ENCODE measurements at regions of chr4 and their contacts with region 1.

Region 1: DNA sequence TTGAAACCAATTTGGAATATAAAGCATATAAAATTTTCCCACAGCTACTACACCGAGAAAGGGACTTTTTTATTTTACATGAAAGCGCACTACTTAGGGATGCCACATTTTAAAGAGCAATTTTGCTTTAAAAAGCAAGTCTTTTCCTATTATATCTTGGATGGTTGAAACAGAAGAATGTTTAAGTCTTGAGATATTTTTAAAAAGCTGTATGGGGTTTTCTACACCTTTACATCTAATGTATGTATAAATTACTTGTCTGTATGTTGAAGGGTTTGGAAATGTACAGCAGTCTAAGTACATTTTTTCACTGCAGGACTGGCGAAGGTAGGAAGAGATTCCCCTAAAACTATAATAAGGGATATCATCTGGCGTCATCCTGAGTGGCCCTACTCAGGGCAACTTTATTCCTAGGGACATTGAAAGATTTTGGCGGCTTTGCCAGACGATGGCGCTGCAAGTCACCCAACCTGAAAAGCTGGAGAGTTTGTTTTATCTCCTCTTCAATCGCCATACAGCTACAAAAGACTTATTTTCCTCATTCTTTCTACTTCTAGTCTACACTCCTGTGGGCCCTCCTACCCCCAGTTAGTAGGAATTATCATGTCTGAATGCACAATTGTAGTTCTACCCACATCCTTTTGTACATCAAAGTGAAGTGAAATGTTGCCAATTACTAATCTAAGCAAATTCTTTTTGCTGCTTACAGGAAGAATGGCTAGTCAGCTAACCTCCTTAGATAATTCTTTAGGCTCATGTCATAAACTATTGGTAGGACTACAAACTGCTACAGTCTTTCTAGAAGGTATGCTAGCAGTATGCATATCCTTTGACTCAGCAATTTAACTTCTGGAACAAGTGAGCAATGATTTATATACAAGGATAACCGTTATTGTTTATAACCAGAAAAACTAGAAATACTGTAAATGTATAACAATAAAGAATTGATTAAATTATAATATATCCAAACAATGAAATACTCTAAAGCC is 782 bp upstream of the NEK1 start:
- DNase-seq: peak; percentile 64
- H3K4me3 Mint-ChIP-seq: peak overlapping the region; percentile 98
- H3K27ac Mint-ChIP-seq: peak overlapping the region; percentile 99
- H3K4me1 Mint-ChIP-seq: peaks cover 55% of the 10 kb centered on the region
- H3K27me3 Mint-ChIP-seq: no peaks in the 10 kb centered on the region

Region 2: DNA sequence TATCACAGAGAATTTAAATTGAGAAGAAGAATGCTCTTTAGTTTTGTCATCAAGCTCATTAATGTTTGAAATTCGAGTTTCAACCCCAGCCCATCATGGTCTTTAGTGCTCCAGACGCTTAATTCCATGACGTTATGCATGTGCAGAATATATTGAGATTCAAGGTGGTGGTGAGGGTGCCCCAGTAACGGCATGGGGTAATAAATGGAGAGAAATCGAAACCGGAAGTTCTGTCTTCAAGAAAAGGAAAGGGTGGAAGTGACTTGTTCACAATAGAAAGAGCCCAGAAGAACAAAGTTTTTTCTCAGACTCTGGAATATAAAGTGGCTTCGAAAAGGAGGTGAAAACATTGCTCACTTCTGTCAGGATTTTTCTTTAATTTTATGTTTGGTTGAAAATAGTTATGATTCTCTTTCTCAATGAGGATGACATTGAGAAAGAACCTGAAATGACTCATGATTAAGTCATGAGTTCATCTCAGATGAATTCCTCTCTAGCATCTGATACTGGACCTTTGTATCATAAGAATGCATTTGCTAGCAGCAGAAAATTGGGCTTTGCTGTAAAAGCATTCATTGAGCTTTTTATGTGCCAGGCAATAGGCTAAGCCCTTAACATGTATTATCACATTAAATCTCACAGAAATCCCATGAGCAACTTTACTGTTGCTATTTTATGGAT is 1132.1 kb before region 1 on chr4:
- intact Hi-C with region 1: loop called (anchors 1 kb)
- DNase-seq: peak; percentile 47
- H3K4me3 Mint-ChIP-seq: peak overlapping the region; percentile 89
- H3K27ac Mint-ChIP-seq: peak overlapping the region; percentile 98
- H3K4me1 Mint-ChIP-seq: peaks cover 58% of the 10 kb centered on the region
- H3K27me3 Mint-ChIP-seq: peaks cover 2% of the 10 kb centered on the region

Region 3: DNA sequence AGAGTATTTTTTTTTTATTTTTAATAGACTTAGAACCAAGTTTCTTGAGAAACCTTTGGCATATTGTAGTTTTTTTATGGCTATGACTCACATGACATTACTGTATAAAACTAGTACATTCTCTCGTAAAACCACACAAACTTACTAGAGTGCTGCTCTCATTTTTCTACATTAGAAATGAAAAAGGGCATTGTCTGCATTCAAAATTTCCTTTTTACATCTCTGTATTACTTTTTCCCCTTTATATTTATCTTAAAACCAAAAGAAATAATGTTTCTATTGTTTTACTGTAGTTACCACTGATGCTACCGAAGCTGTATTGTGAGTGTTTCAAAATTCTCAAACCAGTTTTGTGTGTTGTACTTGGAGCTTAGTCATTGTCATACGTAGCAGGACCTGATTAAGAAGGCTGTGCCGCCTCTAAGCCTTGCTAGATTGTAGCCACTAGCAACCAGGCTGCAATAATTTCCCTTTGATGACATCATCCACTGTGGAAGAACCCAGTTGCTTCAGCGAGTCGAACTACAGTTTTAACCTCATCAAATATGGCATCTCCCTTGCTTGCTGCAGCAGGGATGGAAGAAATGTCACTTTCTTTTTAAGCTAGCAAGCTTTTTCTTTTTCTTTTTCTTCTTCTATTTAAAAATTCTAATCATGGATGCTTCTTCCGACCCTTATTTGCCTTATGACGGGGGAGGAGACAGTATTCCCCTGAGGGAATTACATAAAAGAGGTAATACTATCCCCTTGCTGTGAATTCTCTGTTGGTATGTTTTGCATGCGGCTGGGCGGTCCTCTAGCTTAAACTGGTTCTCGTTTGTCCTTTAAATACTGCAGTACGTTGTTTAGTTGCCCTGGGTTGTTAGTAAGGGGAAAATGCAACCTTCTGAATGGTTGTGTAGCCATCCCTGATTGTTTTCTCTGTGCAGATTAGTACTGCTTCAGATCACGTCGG is 46.8 kb after region 1 on chr4:
- intact Hi-C with region 1: loop called (anchors 1 kb)
- DNase-seq: peak; percentile 70
- H3K4me3 Mint-ChIP-seq: peak overlapping the region; percentile 86
- H3K27ac Mint-ChIP-seq: peak overlapping the region; percentile 97
- H3K4me1 Mint-ChIP-seq: peaks cover 26% of the 10 kb centered on the region
- H3K27me3 Mint-ChIP-seq: no peaks in the 10 kb centered on the region

Region 4: GRCh38 chr4:169810325-169811323 is 197.5 kb after region 1 on chr4:
- intact Hi-C with region 1: loop called (anchors 1 kb)
- DNase-seq: no peak
- H3K4me3 Mint-ChIP-seq: no peak overlapping the region
- H3K27ac Mint-ChIP-seq: no peak overlapping the region
- H3K4me1 Mint-ChIP-seq: peaks cover 4% of the 10 kb centered on the region
- H3K27me3 Mint-ChIP-seq: peaks cover 7% of the 10 kb centered on the region

Region 5: DNA sequence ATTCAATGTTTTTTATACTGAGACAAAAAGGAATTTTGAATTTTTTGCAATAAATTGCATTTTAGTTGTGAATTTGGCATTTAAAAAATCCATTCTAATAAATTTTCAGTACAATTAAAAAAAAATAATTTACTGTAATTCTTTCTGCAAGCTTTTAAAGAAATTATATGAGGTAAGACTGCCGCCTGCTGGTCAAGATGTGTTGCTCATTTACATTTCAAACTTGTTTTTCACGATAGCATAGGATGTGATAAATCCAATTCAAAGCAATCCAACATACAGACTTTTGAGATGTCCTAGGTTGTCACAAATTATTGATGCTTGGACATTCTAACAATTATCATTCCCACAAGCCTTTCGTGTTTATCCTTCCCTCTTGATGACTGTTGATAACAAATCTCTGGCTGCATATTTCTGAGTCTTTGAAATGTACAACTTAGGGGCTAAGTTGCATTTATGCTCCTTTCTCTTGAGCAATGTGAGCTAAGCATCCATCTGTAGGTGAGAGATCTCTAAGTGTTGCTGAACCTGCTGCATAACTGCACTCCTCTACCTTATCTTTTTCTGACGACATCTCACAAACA is 434.7 kb after region 1 on chr4:
- intact Hi-C with region 1: loop called (anchors 1 kb)
- DNase-seq: no peak
- H3K4me3 Mint-ChIP-seq: no peak overlapping the region
- H3K27ac Mint-ChIP-seq: no peak overlapping the region
- H3K4me1 Mint-ChIP-seq: no peaks in the 10 kb centered on the region
- H3K27me3 Mint-ChIP-seq: peaks cover 5% of the 10 kb centered on the region